ENCODE measurements at regions of chr4 and their contacts with region 1.

Region 1: GRCh38 chr4:10106421-10107039 is 10.1 kb downstream of the WDR1 start:
- DNase-seq: peak; percentile 90
- H3K4me3 Mint-ChIP-seq: peak overlapping the region; percentile 66
- H3K27ac Mint-ChIP-seq: peak overlapping the region; percentile 86
- H3K4me1 Mint-ChIP-seq: peaks cover 98% of the 10 kb centered on the region
- H3K27me3 Mint-ChIP-seq: no peaks in the 10 kb centered on the region

Region 2: DNA sequence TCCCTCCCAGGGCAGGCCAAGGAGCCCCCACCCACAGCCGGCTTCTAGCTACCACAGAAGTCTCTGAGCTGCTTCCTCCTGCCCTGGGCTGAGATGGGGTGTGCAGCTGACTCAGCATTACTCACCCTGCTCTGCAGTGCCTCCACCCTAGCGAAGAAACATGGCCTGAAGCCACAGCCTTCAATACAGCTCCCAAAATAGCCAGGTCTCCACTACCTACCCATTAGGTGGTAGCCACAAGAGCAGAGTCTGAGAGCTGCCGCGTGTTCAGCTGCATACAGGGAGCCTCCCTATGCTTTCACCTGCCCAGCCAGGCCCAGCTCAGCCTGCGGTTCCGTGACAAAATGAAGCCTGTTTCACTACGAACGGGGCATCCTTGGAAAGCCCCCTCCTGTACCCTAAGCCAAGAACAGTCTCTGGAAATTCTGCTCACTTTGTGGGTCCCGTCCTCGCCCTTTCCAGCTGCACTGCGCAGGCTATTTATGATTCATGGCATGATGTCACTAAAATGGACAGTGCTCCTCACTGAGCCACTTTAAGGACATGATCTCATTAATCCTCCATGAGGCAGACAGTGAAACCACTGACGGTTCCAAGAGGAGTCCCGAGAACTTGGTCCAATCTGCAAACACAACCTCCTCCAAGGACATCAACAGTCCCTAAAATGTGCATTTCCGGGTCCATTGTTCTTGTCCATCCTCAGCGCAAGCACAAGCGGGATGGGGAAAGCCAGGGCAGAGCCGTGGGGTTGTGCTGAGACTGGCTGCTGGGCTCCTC is 10.1 kb before region 1 on chr4:
- CTCF ChIA-PET with region 1: interaction called, 5 read pairs
- POLR2A ChIA-PET with region 1: interaction called, 24 read pairs
- intact Hi-C with region 1: loop called (anchors 1 kb)
- DNase-seq: peak; percentile 91
- H3K4me3 Mint-ChIP-seq: peak overlapping the region; percentile 37
- H3K27ac Mint-ChIP-seq: peak overlapping the region; percentile 92
- H3K4me1 Mint-ChIP-seq: peaks cover 95% of the 10 kb centered on the region
- H3K27me3 Mint-ChIP-seq: no peaks in the 10 kb centered on the region